ENCODE measurements at regions of chr4 and their contacts with region 1.

Region 1: DNA sequence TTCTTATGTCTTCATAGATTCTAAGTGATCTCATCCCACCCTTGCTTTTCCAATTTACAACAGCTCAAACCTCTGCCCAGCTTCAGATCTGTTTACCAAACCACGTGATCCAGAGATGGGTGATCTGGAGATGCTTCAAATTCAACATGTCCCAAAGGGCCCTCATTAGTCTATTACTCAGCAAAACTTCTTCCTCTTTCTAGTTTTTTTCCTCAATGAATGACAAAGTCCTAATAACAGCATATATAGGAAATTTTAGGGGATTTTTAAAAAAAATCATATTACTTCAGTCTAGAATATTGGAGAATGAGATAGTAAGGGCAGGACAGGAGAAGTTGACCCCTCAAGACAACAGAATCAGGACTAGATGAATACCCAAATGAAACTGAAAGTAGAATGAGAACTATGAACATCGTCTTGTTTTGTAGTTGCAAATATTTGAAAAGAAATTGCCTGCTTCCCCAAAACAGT is 127.1 kb downstream of the CFAP299 start:
- DNase-seq: peak in 3 of 14 experiments; percentile 13 to 45 (median 13)
- ATAC-seq: no peak
- H3K4me3 ChIP-seq: peak overlapping the region; percentile 40
- H3K4me3 Mint-ChIP-seq: peak overlapping the region; percentile 72
- H3K27ac ChIP-seq: peak overlapping the region in 1 of 2 donors; percentile 12
- H3K27ac Mint-ChIP-seq: peak overlapping the region; percentile 10
- H3K4me1 ChIP-seq: peaks cover 3% of the 10 kb centered on the region
- H3K4me1 Mint-ChIP-seq: peaks cover 42% of the 10 kb centered on the region
- H3K27me3 ChIP-seq: no peaks in the 10 kb centered on the region
- H3K27me3 Mint-ChIP-seq: no peaks in the 10 kb centered on the region
- CTCF ChIP-seq: no peak

Region 2: DNA sequence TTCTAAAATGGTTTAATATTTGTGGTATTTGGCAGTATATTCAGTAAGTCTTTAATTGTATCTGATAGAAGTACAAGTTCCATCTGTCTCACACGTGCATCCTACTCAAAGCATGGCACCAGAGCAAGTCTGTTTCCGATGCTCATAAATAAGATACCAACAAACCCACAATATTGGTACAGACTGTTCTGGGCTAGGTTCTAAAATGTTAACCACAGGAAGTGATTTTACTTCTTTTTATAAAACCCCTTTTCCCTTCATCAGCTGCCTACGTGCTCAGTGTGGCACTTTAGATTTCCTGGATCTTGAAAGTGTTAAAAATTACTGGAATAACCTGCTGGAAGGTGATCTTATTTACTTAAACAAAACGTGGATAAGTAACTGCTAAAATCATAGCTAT is 38.0 kb after region 1 on chr4:
- CTCF ChIA-PET with region 1: no interaction called
- POLR2A ChIA-PET with region 1: interaction called, 15 read pairs
- intact Hi-C with region 1: no loop called
- DNase-seq: peak in 7 of 14 experiments; percentile 4 to 90 (median 28)
- ATAC-seq: peak; percentile 99
- H3K4me3 ChIP-seq: no peak overlapping the region
- H3K4me3 Mint-ChIP-seq: peak overlapping the region; percentile 12
- H3K27ac ChIP-seq: no peak overlapping the region
- H3K27ac Mint-ChIP-seq: peak overlapping the region; percentile 72
- H3K4me1 ChIP-seq: peaks cover 10% of the 10 kb centered on the region
- H3K4me1 Mint-ChIP-seq: peaks cover 66% of the 10 kb centered on the region
- H3K27me3 ChIP-seq: no peaks in the 10 kb centered on the region
- H3K27me3 Mint-ChIP-seq: no peaks in the 10 kb centered on the region
- CTCF ChIP-seq: no peak

Region 3: DNA sequence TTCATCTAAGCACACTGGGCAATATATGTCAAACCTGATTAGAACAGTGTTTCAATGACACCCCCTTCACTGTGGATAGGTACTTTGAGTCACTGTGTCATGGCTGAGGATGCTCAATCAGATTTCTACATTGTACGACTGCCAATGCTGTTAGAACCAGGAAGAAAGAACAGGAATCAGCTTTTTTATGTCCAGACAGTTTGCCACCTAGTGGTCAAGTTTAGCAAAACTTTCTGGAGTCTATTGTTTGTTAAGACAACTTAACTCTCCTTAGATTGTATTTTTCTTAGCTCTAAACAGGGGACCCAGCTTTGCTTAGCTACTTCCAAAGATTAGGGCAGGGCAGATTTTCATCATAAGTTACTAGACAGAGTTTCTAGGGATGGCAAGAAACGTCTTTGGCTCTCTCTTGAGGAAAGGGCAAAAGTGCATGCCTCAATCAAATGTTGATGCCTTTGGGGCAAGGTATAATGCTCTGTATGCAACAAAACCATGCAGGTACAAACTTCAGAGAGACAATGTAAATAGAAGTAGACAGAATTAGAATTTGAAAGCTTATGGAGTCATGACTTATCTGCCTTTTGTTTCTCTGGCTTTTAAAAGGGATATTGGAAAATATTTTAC is 527.4 kb after region 1 on chr4:
- CTCF ChIA-PET with region 1: interaction called, 7 read pairs
- POLR2A ChIA-PET with region 1: no interaction called
- intact Hi-C with region 1: loop called (anchors 1 to 5 kb)
- DNase-seq: peak in 5 of 14 experiments; percentile 2 to 69 (median 67)
- ATAC-seq: peak; percentile 48
- H3K4me3 ChIP-seq: no peak overlapping the region
- H3K4me3 Mint-ChIP-seq: no peak overlapping the region
- H3K27ac ChIP-seq: no peak overlapping the region
- H3K27ac Mint-ChIP-seq: no peak overlapping the region
- H3K4me1 ChIP-seq: no peaks in the 10 kb centered on the region
- H3K4me1 Mint-ChIP-seq: peaks cover 4% of the 10 kb centered on the region
- H3K27me3 ChIP-seq: peaks cover 3% of the 10 kb centered on the region in 2 experiments
- H3K27me3 Mint-ChIP-seq: peaks cover 19% of the 10 kb centered on the region
- CTCF ChIP-seq: peak; percentile 85

Region 4: DNA sequence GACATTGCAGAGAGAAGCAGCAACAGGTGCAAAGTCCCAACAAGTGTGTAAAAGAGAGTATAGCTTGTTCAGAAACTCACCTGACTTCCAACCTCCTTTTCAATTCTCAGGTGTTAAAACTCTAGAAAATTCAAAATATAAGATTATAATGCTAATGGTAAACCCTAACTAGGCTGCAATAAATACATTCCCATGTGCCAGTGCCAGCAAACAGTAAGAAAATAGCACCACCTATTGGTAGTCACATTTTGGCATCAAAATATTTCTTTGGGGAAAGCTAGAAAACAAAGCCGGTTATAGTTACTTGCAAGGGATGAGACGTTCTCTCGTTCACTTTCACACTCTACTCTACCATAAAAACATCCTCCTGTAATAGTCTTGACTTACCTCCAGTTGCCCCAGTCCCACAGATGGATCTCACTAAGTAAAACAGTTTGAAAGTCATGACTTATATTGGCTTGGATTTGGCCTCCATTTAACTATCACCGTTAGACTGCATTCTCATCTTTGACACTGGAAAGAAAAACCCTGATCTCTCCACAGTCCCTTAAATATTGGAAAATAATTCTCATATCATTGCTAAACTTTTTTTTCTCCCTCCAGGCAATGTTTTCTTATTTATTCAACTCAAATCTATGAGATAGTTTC is 577.5 kb after region 1 on chr4:
- CTCF ChIA-PET with region 1: no interaction called
- POLR2A ChIA-PET with region 1: no interaction called
- intact Hi-C with region 1: loop called in 1 of 2 experiments (anchors 1 kb)
- DNase-seq: peak in 3 of 14 experiments; percentile 53 to 58 (median 58)
- ATAC-seq: no peak
- H3K4me3 ChIP-seq: no peak overlapping the region
- H3K4me3 Mint-ChIP-seq: no peak overlapping the region
- H3K27ac ChIP-seq: no peak overlapping the region
- H3K27ac Mint-ChIP-seq: no peak overlapping the region
- H3K4me1 ChIP-seq: no peaks in the 10 kb centered on the region
- H3K4me1 Mint-ChIP-seq: no peaks in the 10 kb centered on the region
- H3K27me3 ChIP-seq: peaks cover 0 to 18% of the 10 kb centered on the region in 2 experiments
- H3K27me3 Mint-ChIP-seq: peaks cover 40% of the 10 kb centered on the region
- CTCF ChIP-seq: peak; percentile 63